RWPE1 (cell line): ENCODE measurements at regions of chr6 and their contacts with region 1.

Region 1: GRCh38 chr6:104459543-104459942 is 400.2 kb downstream of the HACE1 start:
- DNase-seq: no peak
- H3K27ac ChIP-seq: no peak overlapping the region
- CTCF ChIP-seq: no peak

Region 2: GRCh38 chr6:104286641-104287040 is 172.9 kb before region 1 on chr6:
- CTCF ChIA-PET with region 1: no interaction called
- POLR2A ChIA-PET with region 1: interaction called, 10 read pairs
- DNase-seq: no peak
- H3K27ac ChIP-seq: no peak overlapping the region
- CTCF ChIP-seq: no peak

Region 3: GRCh38 chr6:104472021-104472901 is 12.7 kb after region 1 on chr6:
- CTCF ChIA-PET with region 1: no interaction called
- POLR2A ChIA-PET with region 1: no interaction called
- DNase-seq: no peak
- H3K27ac ChIP-seq: no peak overlapping the region
- CTCF ChIP-seq: no peak